ENCODE measurements at regions of chr22 and their contacts with region 1.

Region 1: GRCh38 chr22:20393909-20394691 is at the start of gene ZNF74:
- H3K4me3 ChIP-seq: peak within 1 kb of the TSS; percentile 72
- H3K27ac ChIP-seq: peak within 1 kb of the TSS; percentile 53; the same call in 1 of the 2 replicates
- H3K4me1 ChIP-seq: 0 out of 2 replicates have a peak, but pooled peaks cover 2% of the 10 kb centered on the region
- CTCF ChIP-seq: no peak

Region 2: DNA sequence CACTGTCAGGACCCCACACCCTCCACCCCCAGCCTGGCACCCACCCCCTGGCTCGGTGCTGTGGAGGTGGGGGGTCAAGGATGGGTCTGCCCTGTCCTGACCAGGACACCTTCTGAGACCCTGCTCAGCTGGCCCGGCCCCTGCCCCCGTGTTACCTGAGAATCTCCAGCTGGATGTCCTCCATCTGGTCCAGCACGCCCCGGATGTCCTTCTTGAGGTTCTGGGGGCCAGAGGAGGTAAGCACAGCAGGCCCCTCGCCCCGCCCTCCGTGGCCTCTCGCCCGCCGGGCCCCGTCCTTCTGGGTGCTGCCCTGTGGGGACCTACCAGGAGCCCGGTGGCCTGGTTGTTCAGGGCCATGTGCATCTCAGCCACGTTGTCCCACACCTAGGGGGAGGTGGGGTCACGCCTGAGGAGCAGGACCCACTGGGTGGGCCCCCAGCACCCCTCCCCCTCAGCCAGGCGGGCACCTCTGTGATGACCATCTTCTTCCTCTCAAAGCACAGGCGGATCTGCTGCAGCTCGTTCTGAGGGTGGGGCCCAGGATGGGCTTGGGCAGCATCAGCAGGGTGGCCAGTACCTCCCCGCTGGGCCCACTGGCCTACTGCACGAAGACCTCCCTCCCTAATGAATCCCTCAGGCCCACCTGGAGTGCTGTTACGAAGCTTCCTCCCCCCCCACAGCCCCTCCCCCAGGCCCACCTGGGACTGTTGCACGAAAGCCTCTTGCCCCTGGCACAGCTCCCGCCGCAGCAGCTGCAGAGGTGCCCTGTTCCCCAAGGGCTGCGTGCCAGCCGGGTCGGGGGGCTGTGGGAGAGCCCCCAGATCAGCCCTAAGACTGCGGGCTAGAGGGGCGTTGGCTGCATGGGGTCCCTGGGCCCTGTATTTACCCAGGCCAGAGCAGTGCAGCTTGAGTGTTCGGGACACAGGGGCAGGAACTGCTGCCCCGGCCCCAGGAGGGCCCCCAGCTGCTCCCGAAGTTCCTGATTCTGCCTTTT is 244.5 kb before region 1 on chr22:
- CTCF ChIA-PET with region 1: no interaction called
- POLR2A ChIA-PET with region 1: no interaction called
- H3K4me3 ChIP-seq: no peak overlapping the region
- H3K27ac ChIP-seq: no peak overlapping the region
- H3K4me1 ChIP-seq: no peaks in the 10 kb centered on the region
- CTCF ChIP-seq: no peak

Region 3: GRCh38 chr22:20405931-20406685 is 12.0 kb after region 1 on chr22:
- CTCF ChIA-PET with region 1: interaction called, 4 read pairs
- POLR2A ChIA-PET with region 1: interaction called, 13 read pairs
- H3K4me3 ChIP-seq: no peak overlapping the region
- H3K27ac ChIP-seq: no peak overlapping the region
- H3K4me1 ChIP-seq: no peaks in the 10 kb centered on the region
- CTCF ChIP-seq: no peak

Measured in HEK293 (cell line).